PC-9 (cell line): ENCODE measurements at regions of chr6 and their contacts with region 1.

Region 1: DNA sequence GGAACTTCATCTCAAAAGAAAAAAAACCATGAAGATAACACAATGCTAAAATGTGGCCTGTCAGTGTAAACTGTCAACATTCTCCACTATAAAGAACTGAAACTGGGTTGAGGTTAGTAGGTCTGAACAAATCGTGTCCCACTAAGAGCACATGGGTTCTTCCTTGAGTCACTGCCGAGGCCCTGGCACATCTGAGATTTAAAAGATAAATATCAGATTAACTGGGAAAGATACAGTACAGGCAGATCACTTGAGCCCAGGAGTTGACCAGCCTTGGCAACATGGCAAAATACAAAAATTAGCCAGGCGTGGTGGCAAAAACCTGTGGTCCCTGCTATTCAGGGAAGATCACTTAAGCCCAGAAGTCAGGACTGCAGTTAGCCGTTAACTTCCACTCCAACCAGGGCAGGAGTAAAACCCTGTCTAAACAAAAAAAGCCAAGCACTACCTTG is 5.6 kb downstream of the EEF1A1 start:
- DNase-seq: peak in 1 of 2 experiments; percentile 36
- H3K4me3 ChIP-seq: no peak overlapping the region
- H3K27ac ChIP-seq: peak overlapping the region; percentile 76
- H3K4me1 ChIP-seq: peaks cover 15% of the 10 kb centered on the region; the same call in 1 of the 2 replicates
- H3K27me3 ChIP-seq: no peaks in the 10 kb centered on the region
- CTCF ChIP-seq: no peak

Region 2: GRCh38 chr6:73566954-73567591 is 51.8 kb after region 1 on chr6:
- CTCF ChIA-PET with region 1: no interaction called
- POLR2A ChIA-PET with region 1: interaction called, 24 read pairs
- intact Hi-C with region 1: no loop called
- DNase-seq: peak; percentile 55 to 75
- H3K4me3 ChIP-seq: no peak overlapping the region
- H3K27ac ChIP-seq: no peak overlapping the region
- H3K4me1 ChIP-seq: peaks cover 22% of the 10 kb centered on the region
- H3K27me3 ChIP-seq: no peaks in the 10 kb centered on the region
- CTCF ChIP-seq: no peak

Region 3: GRCh38 chr6:73610444-73611275 is 95.4 kb after region 1 on chr6:
- CTCF ChIA-PET with region 1: interaction called, 6 read pairs
- POLR2A ChIA-PET with region 1: interaction called, 10 read pairs
- intact Hi-C with region 1: loop called (anchors 1 kb)
- DNase-seq: peak in 1 of 2 experiments; percentile 56
- H3K4me3 ChIP-seq: no peak overlapping the region
- H3K27ac ChIP-seq: peak overlapping the region; percentile 42
- H3K4me1 ChIP-seq: peaks cover 10% of the 10 kb centered on the region; the same call in 1 of the 2 replicates
- H3K27me3 ChIP-seq: no peaks in the 10 kb centered on the region
- CTCF ChIP-seq: peak; percentile 77

Region 4: GRCh38 chr6:73631849-73632248 is 116.6 kb after region 1 on chr6:
- CTCF ChIA-PET with region 1: no interaction called
- POLR2A ChIA-PET with region 1: no interaction called
- intact Hi-C with region 1: no loop called
- DNase-seq: no peak
- H3K4me3 ChIP-seq: no peak overlapping the region
- H3K27ac ChIP-seq: no peak overlapping the region
- H3K4me1 ChIP-seq: peaks cover 18% of the 10 kb centered on the region
- H3K27me3 ChIP-seq: no peaks in the 10 kb centered on the region
- CTCF ChIP-seq: no peak

Region 5: GRCh38 chr6:73644941-73645591 is 129.8 kb after region 1 on chr6:
- CTCF ChIA-PET with region 1: interaction called, 4 read pairs
- POLR2A ChIA-PET with region 1: interaction called, 13 read pairs
- intact Hi-C with region 1: no loop called
- DNase-seq: no peak
- H3K4me3 ChIP-seq: no peak overlapping the region
- H3K27ac ChIP-seq: 0 out of 2 replicates have a peak overlapping the region, but pooled peaks have one; percentile 48
- H3K4me1 ChIP-seq: peaks cover 22% of the 10 kb centered on the region
- H3K27me3 ChIP-seq: no peaks in the 10 kb centered on the region
- CTCF ChIP-seq: no peak

Region 6: DNA sequence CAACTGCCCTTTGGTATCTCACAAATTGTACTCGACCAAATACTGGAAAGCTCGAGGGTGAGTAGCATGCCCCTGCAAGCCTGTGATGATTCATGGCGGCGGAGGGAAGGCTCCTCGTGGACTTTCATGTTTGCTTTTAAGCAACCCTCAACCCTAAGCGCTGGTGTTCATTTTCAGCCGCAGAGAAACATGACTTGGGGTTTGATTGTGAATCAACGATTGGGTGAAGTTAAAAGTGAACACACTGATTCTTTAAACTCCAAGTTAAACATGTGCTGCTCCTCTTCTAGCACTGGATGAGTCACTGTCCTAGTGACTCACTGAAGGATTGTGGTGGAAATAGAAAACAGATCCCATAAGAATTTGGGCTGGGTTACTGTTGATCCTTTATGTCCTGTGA is 189.0 kb after region 1 on chr6:
- CTCF ChIA-PET with region 1: interaction called, 4 read pairs
- POLR2A ChIA-PET with region 1: interaction called, 22 read pairs
- intact Hi-C with region 1: no loop called
- DNase-seq: peak; percentile 78 to 83
- H3K4me3 ChIP-seq: peak overlapping the region; percentile 11; the same call in 1 of the 2 replicates
- H3K27ac ChIP-seq: peak overlapping the region; percentile 80
- H3K4me1 ChIP-seq: peaks cover 26% of the 10 kb centered on the region
- H3K27me3 ChIP-seq: no peaks in the 10 kb centered on the region
- CTCF ChIP-seq: no peak

Region 7: DNA sequence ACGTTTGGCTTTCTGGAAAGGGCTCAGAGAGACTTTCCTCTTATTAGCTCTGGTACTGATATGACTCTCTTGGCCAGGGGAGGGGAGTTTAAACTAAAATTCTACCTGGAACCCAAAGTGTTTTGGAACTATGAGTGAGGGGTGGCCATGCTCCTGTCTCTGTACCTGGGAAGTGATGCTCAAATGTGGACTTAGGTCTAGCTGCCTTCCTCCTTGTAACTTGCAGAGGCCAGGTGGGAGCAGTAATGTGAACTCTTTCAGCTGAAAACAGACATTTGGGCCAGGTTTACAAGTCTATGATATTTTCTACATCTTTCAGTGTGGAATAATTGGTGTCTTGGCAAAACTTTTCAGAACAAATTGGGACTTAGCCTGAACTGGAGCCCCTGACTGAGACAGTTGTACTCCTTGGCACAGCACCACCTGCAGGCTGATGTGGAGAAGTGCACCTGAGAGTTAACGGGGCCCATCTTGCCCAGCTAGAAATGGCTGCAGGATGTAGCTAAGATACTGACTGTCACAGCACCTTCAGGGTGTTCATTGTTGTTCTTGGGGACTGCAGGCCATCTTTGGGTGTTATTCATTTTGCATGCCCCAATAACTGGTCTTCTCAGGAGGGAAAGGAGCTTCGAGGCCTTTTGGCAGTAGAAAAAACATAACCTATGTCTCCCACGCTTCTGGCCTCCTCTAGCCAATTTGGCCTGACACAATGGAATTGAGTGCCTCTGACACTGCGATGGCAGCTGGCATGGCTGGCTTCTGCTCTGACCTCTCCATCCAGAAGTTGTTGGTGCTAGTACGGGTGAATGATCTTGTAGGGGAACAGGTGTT is 217.8 kb after region 1 on chr6:
- CTCF ChIA-PET with region 1: no interaction called
- POLR2A ChIA-PET with region 1: interaction called, 29 read pairs
- intact Hi-C with region 1: loop called (anchors 1 kb)
- DNase-seq: peak; percentile 48 to 65
- H3K4me3 ChIP-seq: no peak overlapping the region
- H3K27ac ChIP-seq: no peak overlapping the region
- H3K4me1 ChIP-seq: no peaks in the 10 kb centered on the region
- H3K27me3 ChIP-seq: no peaks in the 10 kb centered on the region
- CTCF ChIP-seq: peak; percentile 95